Naive thymus-derived CD4-positive, alpha-beta T cell (primary cell): ENCODE measurements at regions of chr9 and their contacts with region 1.

Region 1: GRCh38 chr9:103193992-103194391 is 198.9 kb downstream of the CYLC2 start:
- DNase-seq: no peak
- ATAC-seq: no peak
- H3K4me3 ChIP-seq: no peak overlapping the region
- H3K4me3 Mint-ChIP-seq: no peak overlapping the region
- H3K27ac ChIP-seq: no peak overlapping the region
- H3K27ac Mint-ChIP-seq: no peak overlapping the region
- H3K4me1 ChIP-seq: no peaks in the 10 kb centered on the region
- H3K4me1 Mint-ChIP-seq: no peaks in the 10 kb centered on the region
- H3K27me3 ChIP-seq: no peaks in the 10 kb centered on the region
- H3K27me3 Mint-ChIP-seq: no peaks in the 10 kb centered on the region

Region 2: GRCh38 chr9:102950346-102950745 is 243.6 kb before region 1 on chr9:
- CTCF ChIA-PET with region 1: no interaction called
- POLR2A ChIA-PET with region 1: no interaction called
- intact Hi-C with region 1: no loop called
- DNase-seq: no peak
- ATAC-seq: no peak
- H3K4me3 ChIP-seq: no peak overlapping the region
- H3K4me3 Mint-ChIP-seq: no peak overlapping the region
- H3K27ac ChIP-seq: no peak overlapping the region
- H3K27ac Mint-ChIP-seq: no peak overlapping the region
- H3K4me1 ChIP-seq: no peaks in the 10 kb centered on the region
- H3K4me1 Mint-ChIP-seq: no peaks in the 10 kb centered on the region
- H3K27me3 ChIP-seq: no peaks in the 10 kb centered on the region
- H3K27me3 Mint-ChIP-seq: no peaks in the 10 kb centered on the region

Region 3: DNA sequence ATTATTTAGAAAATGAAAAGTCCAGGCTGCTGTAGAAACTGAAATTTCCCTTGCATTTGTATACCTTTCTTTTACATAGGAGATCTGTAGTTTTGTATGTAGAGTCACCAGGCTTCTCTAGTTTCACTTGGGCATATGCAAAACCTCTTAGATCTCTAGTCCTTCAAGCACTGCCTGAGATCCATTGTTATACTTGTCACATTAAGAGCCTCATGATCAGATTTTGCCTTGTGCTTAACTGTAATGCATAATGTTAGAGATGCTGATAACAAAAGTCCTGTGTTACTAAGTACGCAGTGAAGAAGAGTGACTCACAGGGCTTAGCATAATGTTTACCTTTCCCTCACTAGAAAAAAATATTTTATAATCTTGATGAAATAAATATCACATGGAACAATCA is 51.4 kb after region 1 on chr9:
- CTCF ChIA-PET with region 1: no interaction called
- POLR2A ChIA-PET with region 1: no interaction called
- intact Hi-C with region 1: loop called in 1 of 2 experiments (anchors 10 kb)
- DNase-seq: no peak
- ATAC-seq: no peak
- H3K4me3 ChIP-seq: no peak overlapping the region
- H3K4me3 Mint-ChIP-seq: no peak overlapping the region
- H3K27ac ChIP-seq: no peak overlapping the region
- H3K27ac Mint-ChIP-seq: no peak overlapping the region
- H3K4me1 ChIP-seq: no peaks in the 10 kb centered on the region
- H3K4me1 Mint-ChIP-seq: no peaks in the 10 kb centered on the region
- H3K27me3 ChIP-seq: no peaks in the 10 kb centered on the region
- H3K27me3 Mint-ChIP-seq: no peaks in the 10 kb centered on the region